Esophagus muscularis mucosa (tissue), 4 donors: ENCODE measurements at regions of chr1 and their contacts with region 1.

Region 1: GRCh38 chr1:157073944-157074767 is 25.5 kb downstream of the ETV3L start:
- DNase-seq: peak; percentile 92
- H3K4me3 ChIP-seq: peak overlapping the region; percentile 17 to 42 (median 22)
- H3K27ac ChIP-seq: no peak overlapping the region
- H3K4me1 ChIP-seq: peaks cover 0 to 9% (median 8%) of the 10 kb centered on the region in 4 donors
- H3K27me3 ChIP-seq: peaks cover 0 to 4% (median 0%) of the 10 kb centered on the region in 4 donors
- CTCF ChIP-seq: peak; percentile 60 to 78 (median 67)
- EP300 ChIP-seq: no peak
- POLR2A ChIP-seq: no peak

Region 2: GRCh38 chr1:156987715-156988114 is 86.4 kb before region 1 on chr1:
- intact Hi-C with region 1: loop called (anchors 10 kb)
- DNase-seq: no peak
- H3K4me3 ChIP-seq: no peak overlapping the region
- H3K27ac ChIP-seq: no peak overlapping the region
- H3K4me1 ChIP-seq: no peaks in the 10 kb centered on the region
- H3K27me3 ChIP-seq: no peaks in the 10 kb centered on the region
- CTCF ChIP-seq: no peak
- EP300 ChIP-seq: no peak
- POLR2A ChIP-seq: no peak

Region 3: GRCh38 chr1:157000686-157001085 is 73.5 kb before region 1 on chr1:
- intact Hi-C with region 1: loop called (anchors 10 kb)
- DNase-seq: no peak
- H3K4me3 ChIP-seq: no peak overlapping the region
- H3K27ac ChIP-seq: no peak overlapping the region
- H3K4me1 ChIP-seq: peaks cover 8 to 39% (median 16%) of the 10 kb centered on the region in 4 donors
- H3K27me3 ChIP-seq: no peaks in the 10 kb centered on the region
- CTCF ChIP-seq: no peak
- EP300 ChIP-seq: no peak
- POLR2A ChIP-seq: no peak

Region 4: GRCh38 chr1:157170677-157171515 is 96.7 kb after region 1 on chr1:
- intact Hi-C with region 1: no loop called
- DNase-seq: no peak
- H3K4me3 ChIP-seq: no peak overlapping the region
- H3K27ac ChIP-seq: no peak overlapping the region
- H3K4me1 ChIP-seq: no peaks in the 10 kb centered on the region
- H3K27me3 ChIP-seq: peaks cover 0 to 27% (median 0%) of the 10 kb centered on the region in 4 donors
- CTCF ChIP-seq: peak in 2 of 3 experiments; percentile 21 to 39
- EP300 ChIP-seq: no peak
- POLR2A ChIP-seq: no peak